ENCODE measurements at regions of chr10 and their contacts with region 1.

Region 1: DNA sequence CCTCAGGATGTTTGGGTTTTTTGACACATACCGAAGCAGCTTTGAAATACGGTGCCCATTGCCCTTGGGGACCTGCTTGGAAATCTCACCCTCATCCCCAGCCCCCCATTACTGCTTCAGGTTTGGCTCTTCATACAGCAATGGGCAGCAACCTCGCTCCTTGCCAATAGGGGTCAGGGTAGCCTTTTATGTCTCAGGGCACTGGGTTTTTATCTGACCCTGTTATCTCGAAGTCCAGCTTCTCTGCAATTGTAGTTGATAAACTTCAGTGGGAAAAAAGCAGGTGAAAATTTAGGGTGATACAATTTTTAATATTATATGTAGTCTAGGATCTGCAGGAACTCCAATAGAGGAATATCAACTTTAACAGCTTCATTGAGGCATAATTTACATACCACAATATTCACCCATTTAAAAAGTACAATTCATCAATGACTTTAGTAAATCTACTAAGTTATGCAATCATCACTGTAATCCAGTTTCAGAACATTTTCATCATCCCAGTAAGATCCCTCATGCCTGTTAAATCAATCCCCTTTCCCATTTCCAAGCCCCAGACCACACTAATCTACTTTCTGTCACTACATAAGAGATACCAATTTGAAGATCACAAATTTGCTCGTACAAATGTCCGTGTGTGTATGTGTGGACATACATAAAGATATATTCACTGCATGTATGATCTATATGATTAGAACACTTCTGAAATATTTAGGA is 386.2 kb downstream of the KCNMA1 start:
- DNase-seq: peak; percentile 46 to 55 (median 51)
- H3K4me3 ChIP-seq: no peak overlapping the region
- H3K27ac ChIP-seq: no peak overlapping the region
- H3K4me1 ChIP-seq: peaks cover 0 to 5% (median 0%) of the 10 kb centered on the region in 4 experiments
- H3K27me3 ChIP-seq: peaks cover 0 to 2% (median 0%) of the 10 kb centered on the region in 5 experiments

Region 2: GRCh38 chr10:77240706-77241349 is 10.6 kb before region 1 on chr10:
- CTCF ChIA-PET with region 1: interaction called, 11 read pairs
- POLR2A ChIA-PET with region 1: no interaction called
- DNase-seq: no peak
- H3K4me3 ChIP-seq: no peak overlapping the region
- H3K27ac ChIP-seq: no peak overlapping the region
- H3K4me1 ChIP-seq: peaks cover 0 to 16% (median under 1%) of the 10 kb centered on the region in 4 experiments
- H3K27me3 ChIP-seq: peaks cover 0 to 2% (median 0%) of the 10 kb centered on the region in 5 experiments

Region 3: GRCh38 chr10:77622889-77623291 is 371.4 kb after region 1 on chr10:
- CTCF ChIA-PET with region 1: no interaction called
- POLR2A ChIA-PET with region 1: no interaction called
- DNase-seq: peak in 2 of 3 donors; percentile 56 to 66
- H3K4me3 ChIP-seq: peak overlapping the region in 1 of 7 experiments; percentile 46
- H3K27ac ChIP-seq: peak overlapping the region in 1 of 2 experiments; percentile 40
- H3K4me1 ChIP-seq: peaks cover 2 to 27% (median 5%) of the 10 kb centered on the region in 4 experiments
- H3K27me3 ChIP-seq: no peaks in the 10 kb centered on the region

Region 4: GRCh38 chr10:77641788-77642397 is 390.4 kb after region 1 on chr10:
- CTCF ChIA-PET with region 1: interaction called, 88 read pairs
- POLR2A ChIA-PET with region 1: no interaction called
- DNase-seq: peak; percentile 69 to 79 (median 71)
- H3K4me3 ChIP-seq: no peak overlapping the region
- H3K27ac ChIP-seq: no peak overlapping the region
- H3K4me1 ChIP-seq: peaks cover 0 to 16% (median 9%) of the 10 kb centered on the region in 4 experiments
- H3K27me3 ChIP-seq: peaks cover 7 to 48% (median 23%) of the 10 kb centered on the region in 5 experiments

Measured in common myeloid progenitor, CD34-positive (primary cell).